Ascending aorta (tissue), 2 donors: ENCODE measurements at regions of chrX and their contacts with region 1.

Region 1: GRCh38 chrX:69045616-69046345 is 119.5 kb downstream of the PJA1 start:
- DNase-seq: peak in 1 of 2 donors; percentile 24
- H3K4me3 ChIP-seq: no peak overlapping the region
- H3K27ac ChIP-seq: no peak overlapping the region
- H3K4me1 ChIP-seq: no peaks in the 10 kb centered on the region
- H3K27me3 ChIP-seq: no peaks in the 10 kb centered on the region
- CTCF ChIP-seq: no peak

Region 2: DNA sequence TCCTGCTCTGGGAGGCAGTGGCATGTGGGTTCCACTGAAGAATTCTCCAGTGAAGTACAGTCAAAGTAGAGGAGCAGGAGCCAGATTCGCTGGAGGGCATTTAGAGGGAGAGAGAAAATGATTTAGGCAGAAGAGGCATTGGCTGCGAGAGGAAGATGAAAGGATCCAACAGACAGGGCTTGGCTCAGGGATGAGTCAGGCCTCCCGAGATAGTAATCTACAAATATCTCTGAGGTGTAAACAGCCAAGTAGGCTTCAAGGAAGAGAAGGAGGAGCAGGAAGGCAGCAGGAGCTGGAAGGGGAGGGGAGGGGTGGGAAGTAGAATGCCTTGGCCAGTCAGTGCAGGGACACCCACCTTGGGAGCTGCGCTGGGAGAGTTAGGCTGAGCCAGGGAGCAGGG is 63.9 kb after region 1 on chrX:
- intact Hi-C with region 1: loop called (anchors 10 kb)
- DNase-seq: no peak
- H3K4me3 ChIP-seq: no peak overlapping the region
- H3K27ac ChIP-seq: no peak overlapping the region
- H3K4me1 ChIP-seq: no peaks in the 10 kb centered on the region
- H3K27me3 ChIP-seq: no peaks in the 10 kb centered on the region
- CTCF ChIP-seq: no peak

Region 3: GRCh38 chrX:69374569-69374968 is 328.8 kb after region 1 on chrX:
- intact Hi-C with region 1: no loop called
- DNase-seq: no peak
- H3K4me3 ChIP-seq: no peak overlapping the region
- H3K27ac ChIP-seq: no peak overlapping the region
- H3K4me1 ChIP-seq: no peaks in the 10 kb centered on the region
- H3K27me3 ChIP-seq: no peaks in the 10 kb centered on the region
- CTCF ChIP-seq: no peak